ENCODE measurements at regions of chr15 and their contacts with region 1.

Region 1: GRCh38 chr15:77543159-77543882 is 89.4 kb downstream of the LINGO1 start:
- DNase-seq: peak; percentile 89
- ATAC-seq: peak; percentile 95
- H3K4me3 Mint-ChIP-seq: peak overlapping the region; percentile 66
- H3K27ac Mint-ChIP-seq: peak overlapping the region; percentile 66
- H3K4me1 Mint-ChIP-seq: peaks cover 4% of the 10 kb centered on the region
- H3K27me3 Mint-ChIP-seq: no peaks in the 10 kb centered on the region

Region 2: GRCh38 chr15:77107531-77108355 is 435.6 kb before region 1 on chr15:
- CTCF ChIA-PET with region 1: interaction called, 27 read pairs
- POLR2A ChIA-PET with region 1: no interaction called
- intact Hi-C with region 1: loop called in 1 of 2 experiments (anchors 1 kb)
- DNase-seq: peak; percentile 69
- ATAC-seq: peak; percentile 66
- H3K4me3 Mint-ChIP-seq: no peak overlapping the region
- H3K27ac Mint-ChIP-seq: no peak overlapping the region
- H3K4me1 Mint-ChIP-seq: no peaks in the 10 kb centered on the region
- H3K27me3 Mint-ChIP-seq: no peaks in the 10 kb centered on the region

Region 3: DNA sequence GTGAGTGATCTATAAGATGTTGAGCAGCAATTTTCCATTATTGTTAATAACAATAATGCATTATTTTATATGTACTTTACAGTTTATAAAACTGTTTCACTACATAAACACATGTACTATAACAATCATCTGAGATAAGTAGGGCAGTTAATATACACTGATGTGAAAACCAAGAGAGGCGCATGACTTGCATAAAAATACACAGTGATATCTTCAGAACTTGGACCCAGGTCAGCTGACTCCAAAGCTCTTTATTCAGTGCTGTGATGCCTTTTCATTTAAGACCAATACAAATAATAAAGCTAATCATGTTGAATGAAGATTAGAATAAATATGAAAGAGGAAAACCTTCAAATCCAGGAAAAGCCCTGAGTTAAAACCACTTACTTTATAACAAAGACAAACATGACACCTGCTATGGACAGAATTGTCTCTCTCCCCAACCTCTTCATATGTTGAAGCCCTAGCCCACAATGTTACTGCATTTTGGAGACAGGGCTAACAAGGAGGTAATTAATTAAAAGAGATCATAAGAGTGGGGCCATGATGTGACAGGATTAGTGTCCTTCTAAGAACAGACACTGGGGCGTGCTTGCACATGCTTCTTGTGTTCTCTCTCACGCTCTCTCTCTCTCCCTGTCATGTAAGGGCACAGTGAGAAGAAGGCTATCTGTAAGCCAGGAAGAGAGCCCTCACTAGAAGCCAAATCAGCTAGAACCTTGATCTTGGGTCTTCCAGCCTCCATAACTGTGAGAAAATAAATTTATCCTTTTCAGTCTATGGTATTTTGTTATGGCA is 416.6 kb before region 1 on chr15:
- CTCF ChIA-PET with region 1: interaction called, 10 read pairs
- POLR2A ChIA-PET with region 1: no interaction called
- intact Hi-C with region 1: no loop called
- DNase-seq: no peak
- ATAC-seq: no peak
- H3K4me3 Mint-ChIP-seq: no peak overlapping the region
- H3K27ac Mint-ChIP-seq: no peak overlapping the region
- H3K4me1 Mint-ChIP-seq: peaks cover 3% of the 10 kb centered on the region
- H3K27me3 Mint-ChIP-seq: no peaks in the 10 kb centered on the region

Region 4: GRCh38 chr15:77496710-77497103 is 46.6 kb before region 1 on chr15:
- CTCF ChIA-PET with region 1: interaction called, 10 read pairs
- POLR2A ChIA-PET with region 1: no interaction called
- intact Hi-C with region 1: no loop called
- DNase-seq: peak; percentile 86
- ATAC-seq: peak; percentile 66
- H3K4me3 Mint-ChIP-seq: no peak overlapping the region
- H3K27ac Mint-ChIP-seq: no peak overlapping the region
- H3K4me1 Mint-ChIP-seq: peaks cover 17% of the 10 kb centered on the region
- H3K27me3 Mint-ChIP-seq: no peaks in the 10 kb centered on the region

Region 5: GRCh38 chr15:77810130-77810571 is 266.8 kb after region 1 on chr15:
- CTCF ChIA-PET with region 1: no interaction called
- POLR2A ChIA-PET with region 1: no interaction called
- intact Hi-C with region 1: no loop called
- DNase-seq: no peak
- ATAC-seq: no peak
- H3K4me3 Mint-ChIP-seq: no peak overlapping the region
- H3K27ac Mint-ChIP-seq: no peak overlapping the region
- H3K4me1 Mint-ChIP-seq: no peaks in the 10 kb centered on the region
- H3K27me3 Mint-ChIP-seq: no peaks in the 10 kb centered on the region